PC-3 (cell line): ENCODE measurements at regions of chr12 and their contacts with region 1.

Region 1: DNA sequence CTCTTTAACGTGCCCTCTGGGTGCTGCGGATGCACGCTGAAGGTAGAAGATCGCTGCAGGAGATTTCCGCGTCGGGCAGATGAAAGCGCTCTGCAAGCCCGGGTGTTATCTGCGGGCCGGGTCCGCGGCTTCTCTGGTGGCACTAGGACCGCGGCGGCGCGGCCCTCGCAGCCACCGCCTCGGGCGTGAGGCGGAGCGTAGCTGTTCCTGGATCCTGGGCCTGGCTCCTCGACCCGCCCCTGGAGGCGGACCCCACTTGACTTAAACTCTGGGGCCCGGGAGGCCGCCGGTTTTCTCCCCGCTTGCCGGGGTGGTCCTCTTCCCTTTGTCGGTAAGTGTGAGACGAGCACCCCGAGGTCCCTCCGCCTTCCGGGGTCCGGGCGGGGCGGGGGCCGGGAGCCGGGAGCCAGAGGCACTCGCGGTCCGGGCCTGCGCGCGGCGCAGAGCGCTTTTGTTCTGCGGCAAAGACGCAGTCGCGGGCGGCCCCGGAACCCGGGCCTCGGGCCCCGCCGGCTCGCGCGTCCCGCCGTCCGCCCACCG is at the start of gene RESF1:
- DNase-seq: peak; percentile 79
- ATAC-seq: peak; percentile 94
- H3K4me3 ChIP-seq: peak within 1 kb of the TSS; percentile 90
- H3K27ac ChIP-seq: peak within 1 kb of the TSS; percentile 45
- H3K4me1 ChIP-seq: peaks cover 14% of the 10 kb centered on the region; the same call in 1 of the 2 replicates
- H3K27me3 ChIP-seq: no peaks in the 10 kb centered on the region
- CTCF ChIP-seq: no peak
- total RNA-seq, gene RESF1: 9.4 and 14.8 TPM in 2 replicates

Region 2: GRCh38 chr12:31659087-31659933 is 299.9 kb before region 1 on chr12 and contains the start of gene ETFBKMT:
- CTCF ChIA-PET with region 1: no interaction called
- POLR2A ChIA-PET with region 1: no interaction called
- intact Hi-C with region 1: loop called (anchors 10 kb)
- DNase-seq: peak; percentile 93
- ATAC-seq: peak; percentile 99
- H3K4me3 ChIP-seq: peak within 1 kb of the TSS; percentile 100
- H3K27ac ChIP-seq: peak within 1 kb of the TSS; percentile 72
- H3K4me1 ChIP-seq: peaks cover 8% of the 10 kb centered on the region
- H3K27me3 ChIP-seq: no peaks in the 10 kb centered on the region
- CTCF ChIP-seq: peak; percentile 21; the same call in 1 of the 2 replicates
- total RNA-seq, gene ETFBKMT: 0.52 and 0.58 TPM in 2 replicates

Region 3: DNA sequence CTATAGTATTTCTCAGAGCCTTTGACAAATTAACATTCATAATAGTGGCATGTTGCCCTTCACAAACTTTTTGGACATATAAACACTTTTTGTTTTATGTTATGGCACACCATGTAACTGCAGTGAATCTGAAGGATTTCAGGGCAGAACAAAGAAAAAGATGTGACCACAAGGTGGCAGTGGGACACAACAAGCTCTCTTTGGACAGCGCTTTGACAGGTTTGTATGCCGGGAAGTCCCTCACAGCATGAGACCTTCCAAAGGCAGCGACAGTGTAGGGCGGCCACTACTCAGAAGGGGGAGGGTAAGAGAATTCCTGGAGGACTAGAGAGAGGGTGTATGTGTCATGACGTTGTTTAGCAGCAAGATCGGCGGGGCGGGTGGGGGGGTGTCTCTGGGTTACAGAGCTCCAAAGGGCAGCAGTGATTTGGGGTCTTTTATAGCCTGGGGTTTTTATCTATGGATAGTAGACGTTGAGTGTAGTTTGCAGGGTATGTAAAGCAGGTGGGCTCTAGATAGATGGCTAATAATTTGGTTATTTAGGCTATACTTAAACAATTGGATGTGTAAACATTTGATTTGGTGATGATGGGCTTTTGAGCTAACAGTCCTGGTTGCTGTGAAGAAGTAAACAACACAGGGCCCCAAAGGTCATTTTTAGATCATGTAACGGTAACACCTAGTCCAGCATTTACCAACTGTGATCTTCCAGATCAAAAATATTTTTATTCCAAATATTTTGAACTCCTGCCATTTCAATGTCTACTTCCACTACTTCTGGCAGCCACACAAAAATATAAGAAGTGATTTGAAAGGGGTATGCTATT is 276.9 kb before region 1 on chr12:
- CTCF ChIA-PET with region 1: no interaction called
- POLR2A ChIA-PET with region 1: no interaction called
- intact Hi-C with region 1: loop called (anchors 10 kb)
- DNase-seq: peak; percentile 80
- ATAC-seq: peak; percentile 66
- H3K4me3 ChIP-seq: no peak overlapping the region
- H3K27ac ChIP-seq: no peak overlapping the region
- H3K4me1 ChIP-seq: no peaks in the 10 kb centered on the region
- H3K27me3 ChIP-seq: no peaks in the 10 kb centered on the region
- CTCF ChIP-seq: peak; percentile 75

Region 4: DNA sequence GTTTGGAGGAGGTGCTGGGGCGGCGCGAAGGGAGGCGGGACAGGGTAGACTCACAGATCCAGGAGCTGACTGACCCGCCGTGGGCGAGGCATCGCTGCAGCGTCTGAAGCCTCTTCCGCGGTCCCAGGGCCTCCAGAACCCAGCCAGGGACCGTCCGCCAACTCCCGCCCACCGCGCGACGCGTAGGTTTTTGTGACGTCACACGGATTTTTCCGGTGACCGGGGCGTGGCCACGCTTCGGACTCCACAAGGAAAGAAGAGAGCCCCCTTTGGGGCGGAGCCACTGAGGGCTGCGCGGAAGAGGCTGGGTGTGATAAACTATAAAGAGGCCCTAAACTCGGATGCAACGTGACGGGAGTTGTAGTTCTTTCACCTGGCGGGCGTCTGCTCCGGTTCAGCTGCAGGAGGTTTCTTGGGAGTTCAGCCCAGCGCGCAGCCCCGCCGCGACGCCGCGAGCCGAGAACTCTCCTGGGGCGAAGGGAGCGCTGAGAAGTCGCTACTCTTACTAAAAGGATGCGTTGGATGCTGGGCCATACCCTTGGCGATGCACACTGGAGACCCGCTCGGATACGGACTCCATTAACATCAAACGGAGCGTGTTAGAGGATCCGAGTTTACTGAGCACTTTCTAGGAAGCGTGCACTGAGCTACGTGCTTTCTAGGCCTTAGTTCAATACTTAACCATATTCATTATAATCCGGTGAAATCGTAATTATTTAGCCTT is 230.2 kb before region 1 on chr12 and contains the start of gene AMN1:
- CTCF ChIA-PET with region 1: no interaction called
- POLR2A ChIA-PET with region 1: interaction called, 3 read pairs
- intact Hi-C with region 1: loop called (anchors 5 kb)
- DNase-seq: peak; percentile 98
- ATAC-seq: peak; percentile 96
- H3K4me3 ChIP-seq: peak within 1 kb of the TSS; percentile 88
- H3K27ac ChIP-seq: peak within 1 kb of the TSS; percentile 77
- H3K4me1 ChIP-seq: peaks cover 38% of the 10 kb centered on the region
- H3K27me3 ChIP-seq: no peaks in the 10 kb centered on the region
- CTCF ChIP-seq: no peak
- total RNA-seq, gene AMN1: 2.1 and 3.9 TPM in 2 replicates

Region 5: GRCh38 chr12:31876568-31877424 is 82.4 kb before region 1 on chr12:
- CTCF ChIA-PET with region 1: no interaction called
- POLR2A ChIA-PET with region 1: no interaction called
- intact Hi-C with region 1: no loop called
- DNase-seq: no peak
- ATAC-seq: no peak
- H3K4me3 ChIP-seq: no peak overlapping the region
- H3K27ac ChIP-seq: no peak overlapping the region
- H3K4me1 ChIP-seq: no peaks in the 10 kb centered on the region
- H3K27me3 ChIP-seq: no peaks in the 10 kb centered on the region
- CTCF ChIP-seq: no peak

Region 6: GRCh38 chr12:32051559-32052414 is 92.6 kb after region 1 on chr12:
- CTCF ChIA-PET with region 1: no interaction called
- POLR2A ChIA-PET with region 1: no interaction called
- intact Hi-C with region 1: loop called (anchors 2 kb)
- DNase-seq: peak; percentile 95
- ATAC-seq: peak; percentile 98
- H3K4me3 ChIP-seq: no peak overlapping the region
- H3K27ac ChIP-seq: peak overlapping the region; percentile 72
- H3K4me1 ChIP-seq: peaks cover 7% of the 10 kb centered on the region
- H3K27me3 ChIP-seq: no peaks in the 10 kb centered on the region
- CTCF ChIP-seq: no peak

Region 7: GRCh38 chr12:32312049-32312670 is 352.9 kb after region 1 on chr12:
- CTCF ChIA-PET with region 1: no interaction called
- POLR2A ChIA-PET with region 1: no interaction called
- intact Hi-C with region 1: loop called (anchors 5 kb)
- DNase-seq: peak; percentile 68
- ATAC-seq: peak; percentile 51
- H3K4me3 ChIP-seq: no peak overlapping the region
- H3K27ac ChIP-seq: no peak overlapping the region
- H3K4me1 ChIP-seq: no peaks in the 10 kb centered on the region
- H3K27me3 ChIP-seq: no peaks in the 10 kb centered on the region
- CTCF ChIP-seq: peak; percentile 79

Region 8: GRCh38 chr12:32568241-32568640 is 609.0 kb after region 1 on chr12:
- CTCF ChIA-PET with region 1: no interaction called
- POLR2A ChIA-PET with region 1: no interaction called
- intact Hi-C with region 1: no loop called
- DNase-seq: peak; percentile 74
- ATAC-seq: peak; percentile 98
- H3K4me3 ChIP-seq: no peak overlapping the region
- H3K27ac ChIP-seq: peak overlapping the region; percentile 39
- H3K4me1 ChIP-seq: peaks cover 23% of the 10 kb centered on the region
- H3K27me3 ChIP-seq: no peaks in the 10 kb centered on the region
- CTCF ChIP-seq: no peak